K562 (cell line): ENCODE measurements at regions of chr20 and their contacts with region 1.

Region 1: GRCh38 chr20:10316582-10316981 is 98.0 kb downstream of the SNAP25 start:
- DNase-seq: peak; percentile 7 to 42 (median 8)
- ATAC-seq: peak; percentile 65
- H3K4me3 ChIP-seq: no peak overlapping the region
- H3K27ac ChIP-seq: no peak overlapping the region
- H3K4me1 ChIP-seq: no peaks in the 10 kb centered on the region
- H3K27me3 ChIP-seq: no peaks in the 10 kb centered on the region
- CTCF ChIP-seq: peak; percentile 23 to 52 (median 38); a peak in 5 of 6 replicates
- EP300 ChIP-seq: no peak
- POLR2A ChIP-seq: no peak
- RAD21 ChIP-seq: peak; percentile 45 to 72

Region 2: DNA sequence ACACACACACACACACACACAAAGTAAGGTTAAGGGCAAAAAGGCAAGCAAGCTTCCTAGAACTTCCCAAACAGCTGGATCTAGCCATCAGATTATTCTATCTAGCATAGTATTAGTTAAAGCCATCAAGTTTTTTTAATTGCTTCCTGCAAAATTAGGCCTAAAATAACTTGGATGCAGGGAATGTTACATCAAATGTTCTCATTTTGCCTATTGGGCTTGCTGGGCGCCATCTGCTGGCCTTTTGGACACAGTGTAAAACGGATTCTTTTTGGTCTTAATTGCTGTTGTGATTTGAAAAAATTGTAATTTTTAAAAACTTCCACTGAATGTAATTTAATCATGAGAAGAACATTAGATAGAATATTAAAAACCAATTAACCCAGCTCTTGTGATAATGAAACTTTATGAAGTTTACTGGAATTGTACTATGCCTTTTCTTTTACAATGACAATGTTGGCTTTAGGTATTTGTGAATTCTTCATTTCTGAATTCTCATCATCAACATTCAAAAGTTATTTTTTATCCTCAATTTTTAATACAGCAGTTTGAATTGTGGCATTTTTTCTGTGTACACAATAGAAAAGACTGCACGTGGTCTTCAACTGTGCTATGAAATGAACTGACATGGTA is 110.6 kb after region 1 on chr20:
- CTCF ChIA-PET with region 1: no interaction called
- POLR2A ChIA-PET with region 1: no interaction called
- in situ Hi-C with region 1: no loop called
- intact Hi-C with region 1: loop called (anchors 5 kb)
- DNase-seq: peak in 3 of 4 experiments; percentile 14 to 51 (median 18)
- ATAC-seq: peak; percentile 56; the same call in 1 of the 3 replicates
- H3K4me3 ChIP-seq: no peak overlapping the region
- H3K27ac ChIP-seq: no peak overlapping the region
- H3K4me1 ChIP-seq: peaks cover 0 to 14% of the 10 kb centered on the region in 2 experiments; a peak in 3 of 5 replicates
- H3K27me3 ChIP-seq: no peaks in the 10 kb centered on the region
- CTCF ChIP-seq: peak; percentile 29 to 67 (median 58); a peak in 5 of 6 replicates
- EP300 ChIP-seq: no peak
- POLR2A ChIP-seq: no peak
- RAD21 ChIP-seq: peak; percentile 32 to 50

Region 3: GRCh38 chr20:10469599-10469998 is 153.0 kb after region 1 on chr20:
- CTCF ChIA-PET with region 1: no interaction called
- POLR2A ChIA-PET with region 1: no interaction called
- in situ Hi-C with region 1: no loop called
- intact Hi-C with region 1: loop called (anchors 2 kb)
- DNase-seq: peak in 3 of 4 experiments; percentile 10 to 64 (median 38)
- ATAC-seq: peak; percentile 85
- H3K4me3 ChIP-seq: no peak overlapping the region
- H3K27ac ChIP-seq: no peak overlapping the region
- H3K4me1 ChIP-seq: peaks cover 0 to 6% of the 10 kb centered on the region in 2 experiments; a peak in 1 of 5 replicates
- H3K27me3 ChIP-seq: no peaks in the 10 kb centered on the region
- CTCF ChIP-seq: peak; percentile 19 to 57 (median 41); a peak in 3 of 6 replicates
- EP300 ChIP-seq: no peak
- POLR2A ChIP-seq: no peak
- RAD21 ChIP-seq: peak; percentile 63 to 69

Region 4: GRCh38 chr20:10536531-10536930 is 219.9 kb after region 1 on chr20:
- CTCF ChIA-PET with region 1: no interaction called
- POLR2A ChIA-PET with region 1: no interaction called
- in situ Hi-C with region 1: no loop called
- intact Hi-C with region 1: loop called (anchors 10 kb)
- DNase-seq: no peak
- ATAC-seq: no peak
- H3K4me3 ChIP-seq: no peak overlapping the region
- H3K27ac ChIP-seq: no peak overlapping the region
- H3K4me1 ChIP-seq: no peaks in the 10 kb centered on the region; a peak in 1 of 5 replicates
- H3K27me3 ChIP-seq: no peaks in the 10 kb centered on the region
- CTCF ChIP-seq: peak; percentile 19 to 46 (median 26); a peak in 4 of 6 replicates
- EP300 ChIP-seq: no peak
- POLR2A ChIP-seq: no peak
- RAD21 ChIP-seq: peak; percentile 28 to 50; a peak in 3 of 4 replicates

Region 5: GRCh38 chr20:11544029-11544678 is 1227.6 kb after region 1 on chr20:
- CTCF ChIA-PET with region 1: no interaction called
- POLR2A ChIA-PET with region 1: no interaction called
- in situ Hi-C with region 1: no loop called
- intact Hi-C with region 1: loop called (anchors 5 kb)
- DNase-seq: peak in 1 of 4 experiments; percentile 18
- ATAC-seq: no peak
- H3K4me3 ChIP-seq: no peak overlapping the region
- H3K27ac ChIP-seq: no peak overlapping the region
- H3K4me1 ChIP-seq: no peaks in the 10 kb centered on the region
- H3K27me3 ChIP-seq: no peaks in the 10 kb centered on the region
- CTCF ChIP-seq: peak in 1 of 3 experiments; percentile 31; a peak in 1 of 6 replicates
- EP300 ChIP-seq: no peak
- POLR2A ChIP-seq: no peak
- RAD21 ChIP-seq: peak; percentile 49 to 61